IMR-90 (cell line): ENCODE measurements at regions of chr16 and their contacts with region 1.

Region 1: DNA sequence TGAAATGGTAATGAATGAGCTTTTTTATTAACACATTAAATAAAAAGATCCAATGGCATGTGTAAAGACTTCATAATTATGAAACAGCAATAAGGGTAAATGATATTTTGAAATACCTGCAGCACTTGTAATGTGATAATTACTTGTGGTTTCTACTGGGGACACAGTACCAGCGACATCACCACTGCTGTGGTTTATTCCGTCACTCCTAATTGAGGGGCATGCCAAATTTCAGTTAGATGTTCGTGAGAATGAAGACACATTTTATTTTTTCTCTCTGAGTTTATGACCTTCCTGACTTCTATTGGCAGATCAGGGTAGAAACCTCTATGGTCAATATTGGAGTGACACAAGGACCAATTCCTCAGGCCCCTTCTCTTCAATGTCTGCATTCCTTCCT is 131.9 kb upstream of the XYLT1 start:
- DNase-seq: no peak
- ATAC-seq: no peak
- H3K4me3 ChIP-seq: no peak overlapping the region
- H3K27ac ChIP-seq: no peak overlapping the region
- H3K4me1 ChIP-seq: no peaks in the 10 kb centered on the region
- H3K27me3 ChIP-seq: peaks cover 5% of the 10 kb centered on the region; the same call in 1 of the 2 replicates
- CTCF ChIP-seq: no peak
- POLR2A ChIP-seq: no peak
- RAD21 ChIP-seq: no peak

Region 2: GRCh38 chr16:17803625-17804024 is 200.9 kb after region 1 on chr16:
- CTCF ChIA-PET with region 1: no interaction called
- POLR2A ChIA-PET with region 1: no interaction called
- dilution Hi-C with region 1: no loop called
- in situ Hi-C with region 1: no loop called
- intact Hi-C with region 1: no loop called
- DNase-seq: peak; percentile 97
- ATAC-seq: peak; percentile 85
- H3K4me3 ChIP-seq: no peak overlapping the region
- H3K27ac ChIP-seq: peak overlapping the region; percentile 52; the same call in 1 of the 2 replicates
- H3K4me1 ChIP-seq: peaks cover 7% of the 10 kb centered on the region
- H3K27me3 ChIP-seq: no peaks in the 10 kb centered on the region
- CTCF ChIP-seq: no peak
- POLR2A ChIP-seq: no peak
- RAD21 ChIP-seq: no peak

Region 3: DNA sequence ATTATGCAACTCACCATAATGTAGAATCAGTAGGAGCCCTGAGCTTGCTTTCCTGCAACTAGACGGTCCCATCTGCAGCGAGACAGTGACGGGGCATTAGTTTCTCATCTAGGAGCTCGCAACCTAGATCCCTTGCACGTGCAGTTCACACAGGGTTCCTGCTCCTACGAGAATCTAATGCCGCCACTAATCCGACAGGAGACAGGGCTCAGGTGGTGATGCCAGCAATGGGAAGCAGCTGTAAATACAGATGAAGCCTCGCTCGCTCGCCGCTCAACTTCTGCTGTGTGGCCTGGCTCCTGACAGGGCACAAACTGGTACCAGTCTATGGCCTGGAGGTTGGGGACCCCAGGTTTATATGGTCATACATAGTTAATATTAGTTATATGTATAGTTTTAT is 339.4 kb after region 1 on chr16:
- CTCF ChIA-PET with region 1: no interaction called
- POLR2A ChIA-PET with region 1: interaction called, 14 read pairs
- dilution Hi-C with region 1: no loop called
- in situ Hi-C with region 1: no loop called
- intact Hi-C with region 1: no loop called
- DNase-seq: no peak
- ATAC-seq: no peak
- H3K4me3 ChIP-seq: no peak overlapping the region
- H3K27ac ChIP-seq: no peak overlapping the region
- H3K4me1 ChIP-seq: no peaks in the 10 kb centered on the region
- H3K27me3 ChIP-seq: no peaks in the 10 kb centered on the region
- CTCF ChIP-seq: no peak
- POLR2A ChIP-seq: no peak
- RAD21 ChIP-seq: no peak